HepG2 (cell line): ENCODE measurements at regions of chr14 and their contacts with region 1.

Region 1: DNA sequence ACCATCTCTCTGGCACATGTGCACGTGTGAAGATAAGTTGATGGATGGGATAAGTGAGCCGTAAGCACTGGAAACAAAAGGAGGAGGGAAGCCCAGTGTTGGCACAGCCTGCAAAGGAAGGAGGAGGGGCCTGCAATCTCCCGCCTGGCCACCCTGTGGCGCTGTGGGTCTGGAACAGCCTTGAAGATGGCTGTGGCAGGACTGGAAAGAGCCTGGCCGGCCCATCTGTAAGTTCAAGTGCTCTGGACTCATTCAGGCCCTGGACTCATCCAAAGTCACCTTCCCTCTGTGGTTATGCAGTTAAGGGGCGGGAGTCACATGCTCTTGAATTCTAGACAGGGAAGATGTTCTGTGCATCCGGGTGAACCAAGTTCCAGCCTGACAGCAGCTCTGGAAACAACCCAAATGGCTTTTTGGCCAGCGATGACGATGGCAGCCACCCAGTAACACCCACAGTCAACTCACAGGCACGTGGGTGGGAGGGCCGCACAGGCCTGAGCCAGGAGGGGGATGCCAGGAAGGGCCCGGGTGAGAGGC is 50.4 kb downstream of the CHGA start:
- DNase-seq: peak; percentile 23
- ATAC-seq: peak; percentile 71
- H3K4me3 ChIP-seq: no peak overlapping the region
- H3K27ac ChIP-seq: no peak overlapping the region
- H3K4me1 ChIP-seq: peaks cover 8% of the 10 kb centered on the region
- H3K27me3 ChIP-seq: no peaks in the 10 kb centered on the region
- CTCF ChIP-seq: peak; percentile 87
- EP300 ChIP-seq: no peak
- POLR2A ChIP-seq: no peak
- RAD21 ChIP-seq: peak; percentile 87

Region 2: DNA sequence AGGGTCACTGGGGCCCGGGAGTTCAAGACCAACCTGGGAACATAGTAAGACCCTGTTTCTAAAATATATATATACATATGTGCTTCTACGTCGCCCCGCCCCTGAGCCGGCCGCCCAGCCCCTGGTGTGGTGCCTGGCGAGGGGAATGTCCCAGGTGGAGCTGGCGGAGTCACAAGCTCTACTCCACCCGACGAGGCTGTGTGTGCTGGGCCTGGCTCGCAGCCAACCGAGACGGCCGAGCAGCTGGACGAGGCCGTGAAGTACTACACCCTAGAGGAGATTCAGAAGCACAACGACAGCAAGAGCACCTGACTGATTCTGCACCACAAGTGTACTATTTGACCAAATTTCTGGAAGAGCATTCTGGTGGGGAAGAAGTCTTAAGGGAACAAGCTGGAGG is 164.5 kb after region 1 on chr14:
- CTCF ChIA-PET with region 1: interaction called, 10 read pairs
- POLR2A ChIA-PET with region 1: no interaction called
- in situ Hi-C with region 1: no loop called
- intact Hi-C with region 1: loop called (anchors 5 kb)
- DNase-seq: peak; percentile 56
- ATAC-seq: peak; percentile 75
- H3K4me3 ChIP-seq: no peak overlapping the region; a peak in 1 of 6 replicates
- H3K27ac ChIP-seq: no peak overlapping the region
- H3K4me1 ChIP-seq: peaks cover 48% of the 10 kb centered on the region
- H3K27me3 ChIP-seq: no peaks in the 10 kb centered on the region; a peak in 1 of 5 replicates
- CTCF ChIP-seq: peak; percentile 35; the same call in 1 of the 2 replicates
- EP300 ChIP-seq: no peak
- POLR2A ChIP-seq: no peak
- RAD21 ChIP-seq: no peak